OCI-LY7 (cell line): ENCODE measurements at regions of chr1 and their contacts with region 1.

Region 1: DNA sequence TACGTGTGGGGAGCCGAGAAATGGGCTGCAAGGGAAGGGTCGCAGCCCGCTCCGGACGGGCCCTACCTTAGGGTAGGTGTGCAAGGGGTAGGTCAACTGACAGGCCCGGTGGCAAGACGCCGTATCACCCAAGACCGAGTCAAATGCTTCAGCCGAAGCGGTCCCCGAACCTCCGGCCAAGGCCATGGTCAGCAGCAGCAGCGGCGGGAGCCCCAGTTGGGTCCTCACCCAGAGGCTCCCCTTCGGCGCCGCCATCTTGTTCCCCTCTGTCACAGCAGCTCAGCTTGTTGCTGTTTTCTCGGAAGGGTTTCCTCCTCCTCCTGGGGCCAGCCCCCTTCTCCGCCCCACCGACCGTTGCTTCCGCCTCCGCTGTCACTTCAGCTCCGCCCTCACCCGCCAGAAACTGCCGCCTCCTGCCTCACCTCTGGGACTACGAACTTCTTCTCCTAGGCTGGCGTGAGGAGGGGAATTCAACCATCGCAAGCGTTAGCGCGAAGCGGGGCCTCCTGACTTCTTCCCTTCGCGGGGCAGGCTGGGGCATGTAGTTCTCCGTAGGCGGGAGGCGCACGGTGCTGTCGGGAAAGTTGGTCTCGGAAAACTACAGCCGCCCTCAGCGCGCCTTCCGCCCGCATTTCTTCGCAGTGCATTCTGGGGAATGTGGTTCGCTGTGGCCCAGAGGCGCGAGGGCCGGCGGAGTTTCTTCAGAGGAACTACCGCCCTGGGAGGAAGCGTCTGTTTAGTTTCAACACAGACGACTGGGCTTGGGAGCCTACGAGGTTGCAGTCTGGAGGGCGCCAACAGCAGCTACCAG is at the starts of genes TCEANC2 and TMEM59:
- DNase-seq: peak; percentile 98
- H3K4me3 ChIP-seq: peak within 1 kb of the TSS; percentile 99
- H3K27ac ChIP-seq: peak within 1 kb of the TSS; percentile 72
- H3K4me1 ChIP-seq: peaks cover 30% of the 10 kb centered on the region
- CTCF ChIP-seq: no peak
- total RNA-seq, gene TCEANC2: 4.9 and 5.1 TPM in 2 replicates
- total RNA-seq, gene TMEM59: 74.5 and 76.7 TPM in 2 replicates

Region 2: DNA sequence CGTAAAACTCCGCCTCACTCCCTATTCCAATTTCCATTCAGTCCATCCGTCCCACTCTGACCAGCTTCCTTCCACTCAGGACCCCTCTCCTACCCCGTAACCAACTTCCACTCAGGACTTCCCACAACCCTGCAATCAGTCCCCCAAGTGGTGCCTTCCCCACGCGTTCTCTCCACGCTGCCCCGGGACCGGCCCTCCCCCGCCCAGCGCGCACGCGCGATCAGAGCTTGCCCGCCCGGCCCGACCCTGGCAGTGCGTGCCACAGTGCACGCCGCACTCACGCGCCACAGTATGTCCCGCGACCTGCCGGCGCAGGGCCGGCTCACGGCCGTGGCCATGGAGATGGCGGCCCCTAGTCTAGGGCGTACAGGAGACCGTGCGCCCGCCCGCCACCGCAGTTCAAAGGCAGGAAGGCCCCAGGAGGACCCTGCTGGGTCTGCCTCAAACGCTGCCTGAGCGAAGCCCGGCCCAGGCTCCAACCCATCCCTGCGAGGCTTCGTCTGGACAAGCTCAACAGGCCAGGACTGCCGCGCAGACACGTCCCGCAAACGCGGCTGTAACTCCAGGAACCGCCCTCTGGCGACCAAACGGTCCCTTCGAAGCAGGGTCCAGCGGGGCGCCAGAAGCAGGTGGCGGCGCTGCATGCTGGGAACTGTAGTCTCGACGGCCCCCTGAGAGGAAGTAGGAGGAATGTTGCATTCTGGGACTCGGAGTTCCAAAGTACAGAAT is 215.1 kb before region 1 on chr1 and contains the start of gene NDC1:
- CTCF ChIA-PET with region 1: no interaction called
- POLR2A ChIA-PET with region 1: interaction called, 5 read pairs
- intact Hi-C with region 1: loop called (anchors 1 kb)
- DNase-seq: peak; percentile 96
- H3K4me3 ChIP-seq: peak within 1 kb of the TSS; percentile 83
- H3K27ac ChIP-seq: peak within 1 kb of the TSS; percentile 83
- H3K4me1 ChIP-seq: peaks cover 32% of the 10 kb centered on the region
- CTCF ChIP-seq: peak; percentile 23; the same call in 1 of the 2 replicates
- total RNA-seq, gene NDC1: 40.0 and 51.8 TPM in 2 replicates

Region 3: GRCh38 chr1:54037476-54037875 is 15.7 kb before region 1 on chr1:
- CTCF ChIA-PET with region 1: no interaction called
- POLR2A ChIA-PET with region 1: interaction called, 11 read pairs
- intact Hi-C with region 1: no loop called
- DNase-seq: no peak
- H3K4me3 ChIP-seq: no peak overlapping the region
- H3K27ac ChIP-seq: no peak overlapping the region
- H3K4me1 ChIP-seq: no peaks in the 10 kb centered on the region
- CTCF ChIP-seq: no peak

Region 4: DNA sequence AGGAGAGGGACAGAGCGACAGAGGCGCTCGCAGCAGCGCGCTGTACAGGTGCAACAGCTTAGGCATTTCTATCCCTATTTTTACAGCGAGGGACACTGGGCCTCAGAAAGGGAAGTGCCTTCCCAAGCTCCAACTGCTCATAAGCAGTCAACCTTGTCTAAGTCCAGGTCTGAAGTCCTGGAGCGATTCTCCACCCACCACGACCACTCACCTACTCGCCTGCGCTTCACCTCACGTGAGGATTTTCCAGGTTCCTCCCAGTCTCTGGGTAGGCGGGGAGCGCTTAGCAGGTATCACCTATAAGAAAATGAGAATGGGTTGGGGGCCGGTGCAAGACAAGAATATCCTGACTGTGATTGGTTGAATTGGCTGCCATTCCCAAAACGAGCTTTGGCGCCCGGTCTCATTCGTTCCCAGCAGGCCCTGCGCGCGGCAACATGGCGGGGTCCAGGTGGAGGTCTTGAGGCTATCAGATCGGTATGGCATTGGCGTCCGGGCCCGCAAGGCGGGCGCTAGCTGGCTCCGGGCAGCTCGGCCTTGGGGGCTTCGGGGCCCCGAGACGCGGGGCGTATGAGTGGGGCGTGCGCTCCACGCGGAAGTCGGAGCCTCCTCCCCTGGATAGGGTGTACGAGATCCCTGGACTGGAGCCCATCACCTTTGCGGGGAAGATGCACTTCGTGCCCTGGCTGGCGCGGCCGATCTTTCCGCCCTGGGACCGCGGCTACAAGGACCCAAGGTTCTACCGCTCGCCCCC is 146.8 kb after region 1 on chr1 and contains the starts of genes CYB5RL and MRPL37:
- CTCF ChIA-PET with region 1: no interaction called
- POLR2A ChIA-PET with region 1: interaction called, 5 read pairs
- intact Hi-C with region 1: loop called (anchors 5 kb)
- DNase-seq: peak; percentile 97
- H3K4me3 ChIP-seq: peak within 1 kb of the TSS; percentile 87
- H3K27ac ChIP-seq: peak within 1 kb of the TSS; percentile 41
- H3K4me1 ChIP-seq: peaks cover 28% of the 10 kb centered on the region
- CTCF ChIP-seq: no peak
- total RNA-seq, gene CYB5RL: 10.1 and 10.4 TPM in 2 replicates
- total RNA-seq, gene MRPL37: 85.6 and 107 TPM in 2 replicates

Region 5: GRCh38 chr1:54764133-54764921 is 711.2 kb after region 1 on chr1 and contains the start of gene PARS2:
- CTCF ChIA-PET with region 1: no interaction called
- POLR2A ChIA-PET with region 1: no interaction called
- intact Hi-C with region 1: loop called (anchors 5 kb)
- DNase-seq: peak; percentile 100
- H3K4me3 ChIP-seq: peak within 1 kb of the TSS; percentile 93
- H3K27ac ChIP-seq: no peak within 1 kb of the TSS
- H3K4me1 ChIP-seq: peaks cover 31% of the 10 kb centered on the region
- CTCF ChIP-seq: no peak
- total RNA-seq, gene PARS2: 6.7 and 7.6 TPM in 2 replicates